ENCODE measurements at regions of chr1 and their contacts with region 1.

Region 1: DNA sequence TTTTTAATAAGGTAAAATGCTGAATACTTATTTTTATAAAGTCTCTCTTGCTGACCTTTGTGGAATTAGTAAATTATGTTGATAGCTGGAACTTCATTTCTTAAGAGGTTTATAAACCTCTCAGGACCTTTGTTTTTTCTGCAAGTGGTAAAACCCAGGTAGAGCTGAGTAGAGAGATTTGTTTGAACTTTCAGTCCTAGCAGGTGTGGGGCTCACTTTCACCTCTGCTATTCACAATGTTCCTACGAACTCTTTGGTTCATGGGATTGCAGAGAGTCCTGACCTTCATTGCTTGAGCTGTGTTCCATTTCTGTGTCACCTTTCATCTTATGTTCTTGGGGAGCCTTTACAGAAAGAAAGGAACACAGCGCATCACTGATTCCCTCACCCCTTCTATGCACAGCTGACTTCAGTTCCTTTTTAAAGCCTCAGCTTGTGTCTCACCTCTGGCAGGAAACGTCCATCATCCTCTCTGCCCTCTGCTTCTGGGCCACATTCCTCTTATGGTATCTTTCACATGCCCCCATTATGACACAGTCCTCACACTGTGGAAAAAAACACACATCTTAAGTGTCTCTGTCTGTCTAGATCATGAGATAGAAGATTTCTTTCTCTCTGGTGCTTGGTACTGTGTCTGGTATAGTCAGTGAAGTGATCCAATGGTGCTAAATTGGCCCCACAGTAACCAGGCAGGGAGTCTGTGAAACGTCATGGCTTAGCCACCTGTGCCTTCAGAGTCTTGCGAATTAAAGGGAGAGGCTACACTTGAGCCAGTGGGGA is 262.5 kb upstream of the B3GALT2 start:
- DNase-seq: peak in 2 of 9 donors; percentile 13 to 19
- ATAC-seq: peak; percentile 50
- H3K4me3 ChIP-seq: no peak overlapping the region
- H3K4me3 Mint-ChIP-seq: peak overlapping the region in 8 of 10 donors; percentile 1 to 36 (median 13)
- H3K27ac ChIP-seq: peak overlapping the region; percentile 3
- H3K27ac Mint-ChIP-seq: peak overlapping the region; percentile 1 to 80 (median 63)
- H3K4me1 ChIP-seq: peaks cover 0 to 7% of the 10 kb centered on the region in 2 donors
- H3K4me1 Mint-ChIP-seq: peaks cover 8 to 20% (median 15%) of the 10 kb centered on the region in 7 donors
- H3K27me3 ChIP-seq: no peaks in the 10 kb centered on the region
- H3K27me3 Mint-ChIP-seq: no peaks in the 10 kb centered on the region

Region 2: GRCh38 chr1:193348091-193348768 is 100.6 kb before region 1 on chr1:
- CTCF ChIA-PET with region 1: no interaction called
- POLR2A ChIA-PET with region 1: no interaction called
- intact Hi-C with region 1: no loop called
- DNase-seq: no peak
- ATAC-seq: no peak
- H3K4me3 ChIP-seq: no peak overlapping the region
- H3K4me3 Mint-ChIP-seq: no peak overlapping the region
- H3K27ac ChIP-seq: no peak overlapping the region
- H3K27ac Mint-ChIP-seq: no peak overlapping the region
- H3K4me1 ChIP-seq: no peaks in the 10 kb centered on the region
- H3K4me1 Mint-ChIP-seq: no peaks in the 10 kb centered on the region
- H3K27me3 ChIP-seq: no peaks in the 10 kb centered on the region
- H3K27me3 Mint-ChIP-seq: peaks cover 0 to 4% (median 0%) of the 10 kb centered on the region in 5 donors

Region 3: GRCh38 chr1:193437785-193438184 is 11.1 kb before region 1 on chr1:
- CTCF ChIA-PET with region 1: no interaction called
- POLR2A ChIA-PET with region 1: no interaction called
- intact Hi-C with region 1: loop called in 1 of 2 experiments (anchors 2 kb)
- DNase-seq: no peak
- ATAC-seq: peak; percentile 31
- H3K4me3 ChIP-seq: no peak overlapping the region
- H3K4me3 Mint-ChIP-seq: peak overlapping the region in 1 of 10 donors; percentile 72
- H3K27ac ChIP-seq: no peak overlapping the region
- H3K27ac Mint-ChIP-seq: peak overlapping the region in 3 of 9 donors; percentile 36 to 92 (median 60)
- H3K4me1 ChIP-seq: peaks cover 5 to 12% of the 10 kb centered on the region in 2 donors
- H3K4me1 Mint-ChIP-seq: peaks cover 0 to 46% (median 12%) of the 10 kb centered on the region in 7 donors
- H3K27me3 ChIP-seq: no peaks in the 10 kb centered on the region
- H3K27me3 Mint-ChIP-seq: no peaks in the 10 kb centered on the region

Region 4: DNA sequence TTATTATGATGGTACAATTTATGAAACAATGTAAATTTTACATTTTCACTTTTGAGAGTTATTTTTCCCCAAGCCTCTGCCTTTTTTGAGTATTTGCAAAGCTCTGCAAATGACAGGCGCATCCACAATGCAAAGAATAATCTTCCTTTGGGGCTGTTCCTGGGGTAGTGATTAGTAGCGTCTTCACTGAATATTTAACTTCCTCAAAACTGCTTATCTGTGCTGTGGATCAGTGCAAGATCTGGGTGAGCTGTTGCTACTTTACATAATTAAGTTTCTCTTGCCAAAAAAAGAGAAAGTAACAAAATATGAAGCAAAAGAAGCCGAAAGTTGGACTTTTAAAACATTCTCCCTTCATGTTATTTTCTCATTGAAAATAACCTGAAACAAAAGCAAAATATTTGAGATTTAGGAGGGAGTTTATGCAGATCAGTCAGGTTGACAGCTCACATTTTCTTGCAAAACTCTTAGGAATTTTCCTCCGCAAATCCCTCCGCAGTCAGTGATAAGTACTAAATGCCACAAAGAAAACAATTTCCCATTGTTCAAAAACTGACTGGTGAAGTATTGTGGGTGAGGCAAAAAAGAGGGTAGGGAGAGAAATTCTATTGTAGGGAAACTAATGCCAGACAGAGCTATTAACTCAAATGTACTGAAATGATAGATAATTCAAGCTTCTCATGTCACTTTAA is 13.9 kb after region 1 on chr1:
- CTCF ChIA-PET with region 1: no interaction called
- POLR2A ChIA-PET with region 1: interaction called, 11 read pairs
- intact Hi-C with region 1: loop called in 1 of 2 experiments (anchors 1 kb)
- DNase-seq: peak in 3 of 9 donors; percentile 3 to 33 (median 20)
- ATAC-seq: peak; percentile 72
- H3K4me3 ChIP-seq: peak overlapping the region; percentile 19
- H3K4me3 Mint-ChIP-seq: peak overlapping the region; percentile 3 to 82 (median 72)
- H3K27ac ChIP-seq: no peak overlapping the region
- H3K27ac Mint-ChIP-seq: peak overlapping the region; percentile 28 to 87 (median 65)
- H3K4me1 ChIP-seq: peaks cover 12 to 20% of the 10 kb centered on the region in 2 donors
- H3K4me1 Mint-ChIP-seq: peaks cover 18 to 41% (median 35%) of the 10 kb centered on the region in 7 donors
- H3K27me3 ChIP-seq: no peaks in the 10 kb centered on the region
- H3K27me3 Mint-ChIP-seq: no peaks in the 10 kb centered on the region